HepG2 (cell line): ENCODE measurements at regions of chr9 and their contacts with region 1.

Region 1: GRCh38 chr9:94554439-94555391 is at the start of gene PCAT7:
- DNase-seq: peak; percentile 84
- ATAC-seq: peak; percentile 92
- H3K4me3 ChIP-seq: peak within 1 kb of the TSS; percentile 75 to 89 (median 79)
- H3K27ac ChIP-seq: peak within 1 kb of the TSS; percentile 90
- H3K4me1 ChIP-seq: peaks cover 29% of the 10 kb centered on the region
- H3K27me3 ChIP-seq: no peaks in the 10 kb centered on the region; a peak in 1 of 5 replicates
- CTCF ChIP-seq: peak; percentile 93
- EP300 ChIP-seq: no peak
- POLR2A ChIP-seq: peak; percentile 90 to 97
- RAD21 ChIP-seq: peak; percentile 94
- total RNA-seq, gene PCAT7: 2.3 and 3.2 TPM in 2 replicates

Region 2: GRCh38 chr9:94603259-94604160 is 48.8 kb after region 1 on chr9:
- CTCF ChIA-PET with region 1: interaction called, 10 read pairs
- POLR2A ChIA-PET with region 1: interaction called, 12 read pairs
- in situ Hi-C with region 1: no loop called
- intact Hi-C with region 1: loop called (anchors 1 kb)
- DNase-seq: peak; percentile 62
- ATAC-seq: peak; percentile 57
- H3K4me3 ChIP-seq: peak overlapping the region in 2 of 3 experiments; percentile 15 to 55; a peak in 3 of 6 replicates
- H3K27ac ChIP-seq: no peak overlapping the region
- H3K4me1 ChIP-seq: peaks cover 78% of the 10 kb centered on the region
- H3K27me3 ChIP-seq: no peaks in the 10 kb centered on the region
- CTCF ChIP-seq: peak; percentile 92
- EP300 ChIP-seq: no peak
- POLR2A ChIP-seq: no peak
- RAD21 ChIP-seq: peak; percentile 73; the same call in 1 of the 2 replicates

Region 3: GRCh38 chr9:94623253-94623652 is 68.5 kb after region 1 on chr9:
- CTCF ChIA-PET with region 1: interaction called, 17 read pairs
- POLR2A ChIA-PET with region 1: interaction called, 37 read pairs
- in situ Hi-C with region 1: no loop called
- intact Hi-C with region 1: loop called (anchors 1 kb)
- DNase-seq: peak; percentile 85
- ATAC-seq: peak; percentile 95
- H3K4me3 ChIP-seq: peak overlapping the region in 1 of 3 experiments; percentile 39; a peak in 2 of 6 replicates
- H3K27ac ChIP-seq: no peak overlapping the region
- H3K4me1 ChIP-seq: peaks cover 14% of the 10 kb centered on the region
- H3K27me3 ChIP-seq: peaks cover 2 to 8% of the 10 kb centered on the region in 2 experiments; a peak in 3 of 5 replicates
- CTCF ChIP-seq: peak; percentile 96
- EP300 ChIP-seq: no peak
- POLR2A ChIP-seq: no peak
- RAD21 ChIP-seq: peak; percentile 84

Region 4: GRCh38 chr9:94656200-94656599 is 101.5 kb after region 1 on chr9:
- CTCF ChIA-PET with region 1: no interaction called
- POLR2A ChIA-PET with region 1: no interaction called
- in situ Hi-C with region 1: no loop called
- intact Hi-C with region 1: no loop called
- DNase-seq: no peak
- ATAC-seq: peak; percentile 24; the same call in 1 of the 3 replicates
- H3K4me3 ChIP-seq: no peak overlapping the region
- H3K27ac ChIP-seq: no peak overlapping the region
- H3K4me1 ChIP-seq: no peaks in the 10 kb centered on the region
- H3K27me3 ChIP-seq: peaks cover 3 to 23% of the 10 kb centered on the region in 2 experiments; a peak in 3 of 5 replicates
- CTCF ChIP-seq: no peak
- EP300 ChIP-seq: no peak
- POLR2A ChIP-seq: no peak
- RAD21 ChIP-seq: no peak

Region 5: DNA sequence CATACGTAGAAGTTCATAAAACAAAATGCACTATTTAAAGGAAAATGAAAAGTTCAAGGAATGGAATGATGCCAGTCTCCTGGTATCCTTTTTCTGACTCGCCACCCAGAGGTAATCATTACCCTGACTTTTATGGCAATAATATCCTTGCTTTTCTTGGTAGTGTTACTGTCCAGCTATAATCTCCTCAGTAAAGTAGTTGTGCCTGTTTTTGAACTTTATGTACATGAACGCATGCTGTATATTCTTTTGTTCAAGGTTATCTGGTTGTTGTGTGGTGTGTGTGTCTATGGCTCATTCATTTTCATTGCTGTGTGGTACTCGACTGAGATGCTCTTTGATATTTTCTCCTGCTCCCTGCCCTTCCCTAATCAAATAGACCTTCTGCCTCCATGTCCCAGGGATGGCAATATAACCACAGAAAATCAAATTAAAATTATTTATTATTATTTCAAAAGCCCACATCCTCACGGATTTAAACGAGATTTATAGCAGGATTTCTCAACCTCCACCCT is 113.8 kb after region 1 on chr9:
- CTCF ChIA-PET with region 1: no interaction called
- POLR2A ChIA-PET with region 1: interaction called, 9 read pairs
- in situ Hi-C with region 1: no loop called
- intact Hi-C with region 1: loop called (anchors 2 kb)
- DNase-seq: no peak
- ATAC-seq: no peak
- H3K4me3 ChIP-seq: peak overlapping the region in 1 of 3 experiments; percentile 74; a peak in 1 of 6 replicates
- H3K27ac ChIP-seq: no peak overlapping the region
- H3K4me1 ChIP-seq: peaks cover 43% of the 10 kb centered on the region
- H3K27me3 ChIP-seq: no peaks in the 10 kb centered on the region; a peak in 1 of 5 replicates
- CTCF ChIP-seq: no peak
- EP300 ChIP-seq: no peak
- POLR2A ChIP-seq: no peak
- RAD21 ChIP-seq: no peak